ENCODE measurements at regions of chr1 and their contacts with region 1.

Region 1: GRCh38 chr1:3119725-3120124 is 50.7 kb downstream of the PRDM16 start:
- DNase-seq: no peak
- ATAC-seq: 0 out of 3 replicates have a peak, but pooled peaks have one; percentile 7
- H3K4me3 ChIP-seq: no peak overlapping the region
- H3K27ac ChIP-seq: no peak overlapping the region
- H3K4me1 ChIP-seq: peaks cover 42% of the 10 kb centered on the region
- H3K27me3 ChIP-seq: peaks cover 2 to 10% of the 10 kb centered on the region in 2 experiments; a peak in 1 of 5 replicates
- CTCF ChIP-seq: peak; percentile 51
- EP300 ChIP-seq: no peak
- POLR2A ChIP-seq: no peak
- RAD21 ChIP-seq: peak; percentile 36; the same call in 1 of the 2 replicates

Region 2: GRCh38 chr1:3170561-3171453 is 51.1 kb after region 1 on chr1:
- CTCF ChIA-PET with region 1: no interaction called
- POLR2A ChIA-PET with region 1: no interaction called
- in situ Hi-C with region 1: no loop called
- intact Hi-C with region 1: loop called (anchors 10 kb)
- DNase-seq: peak; percentile 40
- ATAC-seq: peak; percentile 79
- H3K4me3 ChIP-seq: peak overlapping the region; percentile 53 to 78 (median 54)
- H3K27ac ChIP-seq: peak overlapping the region; percentile 58
- H3K4me1 ChIP-seq: peaks cover 22% of the 10 kb centered on the region
- H3K27me3 ChIP-seq: peaks cover 1 to 3% of the 10 kb centered on the region in 2 experiments; a peak in 2 of 5 replicates
- CTCF ChIP-seq: no peak
- EP300 ChIP-seq: peak in 1 of 2 experiments; percentile 19; a peak in 1 of 4 replicates
- POLR2A ChIP-seq: peak in 1 of 2 experiments; percentile 64; a peak in 2 of 4 replicates
- RAD21 ChIP-seq: no peak

Region 3: DNA sequence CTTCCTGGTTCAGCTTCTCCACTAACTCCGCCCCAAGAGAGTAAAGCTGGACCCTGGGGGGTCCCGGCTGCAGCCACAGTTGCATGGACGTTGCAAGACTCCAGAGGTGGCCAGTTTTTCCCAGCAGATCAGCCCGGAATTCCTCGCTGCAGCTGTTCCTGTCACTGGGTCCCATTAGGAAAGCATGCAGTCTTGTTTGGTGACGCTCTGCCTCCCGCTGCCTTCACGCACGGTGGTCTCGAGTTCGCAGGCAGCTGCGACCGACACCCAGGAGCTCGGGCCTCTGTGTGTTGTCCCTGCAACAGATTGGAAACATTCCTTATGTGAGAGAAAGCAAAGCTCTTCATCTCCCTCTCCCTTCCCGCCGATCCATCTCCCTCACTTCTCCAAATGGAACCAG is 112.1 kb after region 1 on chr1:
- CTCF ChIA-PET with region 1: no interaction called
- POLR2A ChIA-PET with region 1: no interaction called
- in situ Hi-C with region 1: no loop called
- intact Hi-C with region 1: no loop called
- DNase-seq: no peak
- ATAC-seq: no peak
- H3K4me3 ChIP-seq: no peak overlapping the region
- H3K27ac ChIP-seq: no peak overlapping the region
- H3K4me1 ChIP-seq: peaks cover 77% of the 10 kb centered on the region
- H3K27me3 ChIP-seq: no peaks in the 10 kb centered on the region; a peak in 1 of 5 replicates
- CTCF ChIP-seq: no peak
- EP300 ChIP-seq: no peak
- POLR2A ChIP-seq: no peak
- RAD21 ChIP-seq: no peak

Measured in HepG2 (cell line).